Activated naive CD4-positive, alpha-beta T cell treated with anti-CD3 and anti-CD28 coated beads, Interleukin-2, amount 10 ng/mL, durations not matched to agents 7 days and 5 days (primary cell): ENCODE measurements at regions of chr19 and their contacts with region 1.

Region 1: GRCh38 chr19:1837625-1838105 is 10.6 kb downstream of the REXO1 start:
- DNase-seq: peak; percentile 75
- H3K4me3 Mint-ChIP-seq: no peak overlapping the region
- H3K27ac Mint-ChIP-seq: no peak overlapping the region
- H3K4me1 Mint-ChIP-seq: peaks cover 15% of the 10 kb centered on the region
- H3K27me3 Mint-ChIP-seq: no peaks in the 10 kb centered on the region

Region 2: GRCh38 chr19:1725100-1726064 is 112.3 kb before region 1 on chr19:
- CTCF ChIA-PET with region 1: no interaction called
- DNase-seq: peak; percentile 57
- H3K4me3 Mint-ChIP-seq: peak overlapping the region; percentile 58
- H3K27ac Mint-ChIP-seq: no peak overlapping the region
- H3K4me1 Mint-ChIP-seq: peaks cover 10% of the 10 kb centered on the region
- H3K27me3 Mint-ChIP-seq: peaks cover 90% of the 10 kb centered on the region

Region 3: DNA sequence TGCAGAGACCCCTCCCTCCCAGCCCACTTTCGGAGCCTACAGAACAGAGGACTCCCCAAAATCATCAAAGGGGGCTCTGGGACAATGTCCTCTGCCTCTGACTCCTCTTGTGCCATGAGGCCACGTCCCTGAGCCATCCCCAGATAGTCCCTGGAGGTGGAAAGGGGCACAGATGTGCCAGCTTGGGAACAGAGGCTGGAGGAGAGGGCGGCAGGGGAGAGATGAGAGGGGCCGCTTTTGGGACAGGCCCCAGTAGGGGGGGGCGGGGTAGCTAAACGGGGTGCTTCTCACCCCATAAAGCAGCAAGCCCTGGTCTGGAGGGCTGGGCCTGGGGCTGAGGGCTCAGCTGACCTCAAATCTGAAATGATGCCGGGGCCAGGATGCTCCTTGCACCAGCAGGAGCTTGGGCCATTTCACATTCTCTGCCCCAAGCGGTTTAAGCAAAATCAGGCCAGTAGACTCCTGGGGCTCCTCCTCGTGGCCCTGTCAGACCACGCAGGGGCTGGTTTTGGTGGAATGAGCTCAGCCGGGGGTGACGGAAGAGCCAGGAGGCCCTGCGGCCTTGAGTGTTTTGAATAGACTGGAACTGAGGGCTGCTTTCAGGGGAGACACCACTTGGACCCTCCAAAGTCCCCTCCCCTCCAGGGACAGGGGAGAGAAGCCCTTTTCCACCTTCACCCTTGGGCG is 57.2 kb before region 1 on chr19:
- CTCF ChIA-PET with region 1: no interaction called
- DNase-seq: no peak
- H3K4me3 Mint-ChIP-seq: no peak overlapping the region
- H3K27ac Mint-ChIP-seq: no peak overlapping the region
- H3K4me1 Mint-ChIP-seq: no peaks in the 10 kb centered on the region
- H3K27me3 Mint-ChIP-seq: peaks cover 95% of the 10 kb centered on the region

Region 4: DNA sequence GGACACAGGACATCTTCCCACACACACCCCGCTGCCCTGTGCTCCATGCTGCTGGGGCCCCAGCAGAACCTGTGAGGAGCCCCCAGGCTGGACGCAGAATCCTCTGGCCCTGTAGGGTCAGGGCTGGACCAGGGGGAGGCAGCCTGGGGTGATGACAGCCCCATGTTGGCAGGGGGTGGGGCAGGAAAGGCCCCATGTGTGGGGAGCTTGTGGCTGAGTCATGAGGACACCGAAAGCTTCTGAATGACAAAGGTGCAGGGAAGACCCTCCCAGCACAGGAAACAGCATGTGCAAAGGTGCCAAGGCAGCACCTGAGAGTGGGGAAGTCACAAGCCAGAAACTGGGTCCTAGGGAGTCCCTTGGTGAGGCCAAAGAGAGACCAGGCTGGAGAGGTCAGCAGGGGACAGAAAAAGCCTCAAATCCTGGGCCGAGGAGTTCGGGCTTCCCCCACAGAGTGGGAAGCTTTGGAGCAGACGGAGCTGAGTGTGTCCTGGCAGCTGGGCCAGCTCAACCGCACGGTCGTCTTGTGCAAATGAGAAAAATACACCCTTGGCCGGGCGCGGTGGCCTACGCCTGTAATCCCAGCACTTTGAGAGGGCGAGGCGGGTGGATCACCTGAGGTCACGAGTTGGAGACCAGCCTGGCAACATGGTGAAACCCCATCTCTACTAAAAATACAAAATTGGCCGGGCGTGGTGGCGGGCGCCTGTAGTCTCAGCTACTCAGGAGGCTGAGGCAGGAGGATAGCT is 43.1 kb before region 1 on chr19:
- CTCF ChIA-PET with region 1: no interaction called
- DNase-seq: no peak
- H3K4me3 Mint-ChIP-seq: no peak overlapping the region
- H3K27ac Mint-ChIP-seq: no peak overlapping the region
- H3K4me1 Mint-ChIP-seq: peaks cover 8% of the 10 kb centered on the region
- H3K27me3 Mint-ChIP-seq: peaks cover 53% of the 10 kb centered on the region

Region 5: GRCh38 chr19:1819341-1820275 is 18.1 kb before region 1 on chr19:
- CTCF ChIA-PET with region 1: interaction called, 25 read pairs
- DNase-seq: no peak
- H3K4me3 Mint-ChIP-seq: no peak overlapping the region
- H3K27ac Mint-ChIP-seq: no peak overlapping the region
- H3K4me1 Mint-ChIP-seq: no peaks in the 10 kb centered on the region
- H3K27me3 Mint-ChIP-seq: no peaks in the 10 kb centered on the region

Region 6: DNA sequence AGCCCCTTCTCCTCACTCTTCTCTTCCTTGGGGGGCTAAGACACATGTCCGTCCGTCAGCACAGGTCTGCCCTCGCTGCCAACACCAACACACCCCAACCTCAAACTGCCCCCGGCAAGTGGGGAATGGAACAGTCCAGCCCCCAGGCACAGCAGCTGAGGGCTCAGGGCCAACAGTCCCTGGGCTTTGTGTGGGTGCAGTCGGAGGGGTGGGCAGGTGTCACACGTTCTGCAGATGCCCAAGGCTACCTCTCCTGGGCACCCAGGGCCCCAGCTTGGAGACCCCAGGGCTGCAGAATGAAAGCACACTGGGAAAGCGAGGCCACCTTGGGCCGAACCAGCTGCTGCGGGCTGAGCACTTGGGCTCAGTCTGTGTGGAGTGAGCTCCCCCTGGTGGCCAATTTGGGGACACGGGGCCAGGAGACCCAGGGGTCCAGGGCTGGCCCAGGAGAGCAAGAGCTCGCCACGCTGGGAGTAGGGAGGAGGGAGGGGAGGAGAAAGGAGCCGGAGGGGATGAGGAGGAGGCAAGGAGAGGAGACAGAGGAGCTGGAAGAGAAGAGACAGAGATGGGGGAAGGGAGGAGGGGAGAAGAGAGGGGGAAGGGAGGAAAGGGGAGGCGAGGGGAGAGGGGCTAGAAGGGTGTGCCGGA is 11.6 kb before region 1 on chr19:
- CTCF ChIA-PET with region 1: interaction called, 25 read pairs
- DNase-seq: peak; percentile 85
- H3K4me3 Mint-ChIP-seq: no peak overlapping the region
- H3K27ac Mint-ChIP-seq: no peak overlapping the region
- H3K4me1 Mint-ChIP-seq: peaks cover 4% of the 10 kb centered on the region
- H3K27me3 Mint-ChIP-seq: no peaks in the 10 kb centered on the region